MCF 10A (cell line): ENCODE measurements at regions of chr9 and their contacts with region 1.

Region 1: DNA sequence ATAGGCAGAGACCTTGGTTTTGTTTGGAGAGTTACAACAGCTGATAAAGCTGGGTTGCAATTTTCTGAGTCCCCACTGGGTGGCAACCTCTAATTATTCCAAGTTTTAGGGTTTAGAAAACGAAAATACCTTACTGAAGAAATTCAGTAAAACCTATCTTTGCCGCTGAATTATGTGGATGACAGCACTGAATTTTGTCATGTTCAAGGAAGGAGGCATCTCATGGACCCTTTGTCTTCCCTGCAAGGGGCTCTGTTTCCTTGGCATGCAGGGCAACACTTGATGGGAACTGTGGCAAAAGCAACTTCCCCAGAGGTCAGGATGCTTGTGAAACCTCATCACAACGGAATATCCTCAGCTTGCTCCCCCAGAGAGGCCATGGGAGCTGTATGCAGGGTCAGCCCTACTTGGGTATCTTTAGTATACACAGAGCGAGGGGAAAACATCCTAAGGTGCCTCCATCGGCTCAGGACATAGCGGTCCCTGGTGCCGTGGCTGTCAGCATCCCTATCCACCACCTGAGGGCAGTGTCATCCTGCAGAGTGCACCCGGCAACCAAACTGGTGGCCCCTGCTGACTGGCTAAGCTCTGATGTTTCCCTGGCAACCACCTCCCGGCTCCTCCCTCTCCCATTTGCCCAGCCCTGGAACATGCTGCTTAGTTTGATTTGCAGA is 123.1 kb downstream of the RXRA start:
- DNase-seq: peak; percentile 91
- H3K4me3 Mint-ChIP-seq: no peak overlapping the region
- H3K27ac Mint-ChIP-seq: no peak overlapping the region
- H3K4me1 Mint-ChIP-seq: peaks cover 13% of the 10 kb centered on the region
- H3K27me3 Mint-ChIP-seq: no peaks in the 10 kb centered on the region
- CTCF ChIP-seq: peak; percentile 82

Region 2: GRCh38 chr9:134656334-134657006 is 207.1 kb after region 1 on chr9:
- CTCF ChIA-PET with region 1: interaction called, 4 read pairs
- POLR2A ChIA-PET with region 1: no interaction called
- intact Hi-C with region 1: loop called (anchors 1 kb)
- DNase-seq: peak; percentile 48
- H3K4me3 Mint-ChIP-seq: no peak overlapping the region
- H3K27ac Mint-ChIP-seq: no peak overlapping the region
- H3K4me1 Mint-ChIP-seq: peaks cover 2% of the 10 kb centered on the region
- H3K27me3 Mint-ChIP-seq: no peaks in the 10 kb centered on the region
- CTCF ChIP-seq: peak; percentile 33

Region 3: GRCh38 chr9:134689321-134690181 is 240.2 kb after region 1 on chr9:
- CTCF ChIA-PET with region 1: interaction called, 5 read pairs
- POLR2A ChIA-PET with region 1: interaction called, 3 read pairs
- intact Hi-C with region 1: loop called (anchors 1 kb)
- DNase-seq: peak; percentile 48
- H3K4me3 Mint-ChIP-seq: no peak overlapping the region
- H3K27ac Mint-ChIP-seq: no peak overlapping the region
- H3K4me1 Mint-ChIP-seq: no peaks in the 10 kb centered on the region
- H3K27me3 Mint-ChIP-seq: peaks cover 19% of the 10 kb centered on the region
- CTCF ChIP-seq: peak; percentile 76